Dorsolateral prefrontal cortex (tissue), 120 donors: ENCODE measurements at regions of chr11 and their contacts with region 1.

Region 1: DNA sequence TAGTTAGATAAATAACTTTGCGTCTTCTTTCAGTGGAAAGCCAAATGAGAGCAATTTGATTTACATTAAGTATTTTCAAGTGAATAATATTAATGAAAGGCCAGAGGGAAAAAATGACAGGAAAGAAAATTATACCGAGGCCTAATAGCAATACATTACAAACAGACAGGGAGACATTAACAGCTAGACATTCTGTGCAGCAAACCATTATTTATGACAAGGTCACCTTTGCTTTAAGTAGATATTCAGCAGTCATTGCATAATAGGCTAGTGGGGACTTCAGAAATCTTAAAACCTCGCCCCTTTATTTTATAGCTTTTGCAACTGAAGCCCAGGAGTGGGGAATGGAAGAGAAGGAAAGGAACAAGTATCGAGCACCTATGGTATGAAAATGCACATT is 321.6 kb downstream of the GRM5 start:
- DNase-seq: no peak
- H3K4me3 ChIP-seq: no peak overlapping the region
- H3K27ac ChIP-seq: no peak overlapping the region
- H3K27me3 ChIP-seq: no peaks in the 10 kb centered on the region
- CTCF ChIP-seq: no peak

Region 2: DNA sequence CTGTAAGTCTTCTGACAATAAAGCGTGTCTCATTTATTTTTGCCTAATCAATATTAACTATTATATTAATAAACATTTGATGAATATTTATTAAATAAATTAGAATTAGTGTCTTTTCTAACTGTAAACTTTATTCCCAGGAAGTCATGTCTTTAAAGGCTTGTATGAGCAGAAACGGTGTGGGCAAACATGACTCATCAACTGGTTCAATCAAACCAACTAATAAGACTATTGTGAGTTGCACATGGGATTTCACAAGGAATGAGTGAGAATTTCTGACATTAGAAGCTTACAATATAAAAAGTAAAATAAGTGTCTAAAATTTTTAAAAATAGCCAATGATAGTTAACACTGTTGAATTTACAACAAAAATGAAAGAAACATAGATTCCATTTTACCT is 147.4 kb before region 1 on chr11:
- intact Hi-C with region 1: no loop called
- DNase-seq: no peak
- H3K4me3 ChIP-seq: no peak overlapping the region
- H3K27ac ChIP-seq: no peak overlapping the region
- H3K27me3 ChIP-seq: no peaks in the 10 kb centered on the region
- CTCF ChIP-seq: no peak

Region 3: GRCh38 chr11:88680806-88681205 is 63.3 kb before region 1 on chr11:
- intact Hi-C with region 1: loop called in 1 of 2 experiments (anchors 10 kb)
- DNase-seq: no peak
- H3K4me3 ChIP-seq: no peak overlapping the region
- H3K27ac ChIP-seq: no peak overlapping the region
- H3K27me3 ChIP-seq: no peaks in the 10 kb centered on the region
- CTCF ChIP-seq: no peak

Region 4: DNA sequence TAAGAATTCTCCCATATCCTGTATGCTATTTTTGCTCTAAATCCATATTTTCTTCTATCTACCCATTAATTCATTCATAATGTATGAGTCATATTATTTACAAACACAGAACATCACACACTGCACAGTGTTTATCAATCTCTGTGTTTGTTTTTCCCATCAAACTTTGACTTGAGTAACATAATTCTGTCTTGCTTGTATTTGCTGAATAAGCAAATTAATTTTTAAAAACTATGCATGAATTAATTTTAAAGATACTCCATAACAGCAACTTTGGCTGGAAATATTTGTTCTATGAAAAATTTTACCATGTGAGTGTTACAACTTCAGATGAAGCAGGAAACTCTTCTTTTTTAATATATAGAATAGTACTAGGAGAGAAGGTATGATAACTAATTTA is 46.0 kb after region 1 on chr11:
- intact Hi-C with region 1: no loop called
- DNase-seq: no peak
- H3K4me3 ChIP-seq: no peak overlapping the region
- H3K27ac ChIP-seq: no peak overlapping the region
- H3K27me3 ChIP-seq: no peaks in the 10 kb centered on the region
- CTCF ChIP-seq: no peak

Region 5: GRCh38 chr11:89182773-89183518 is 438.8 kb after region 1 on chr11:
- intact Hi-C with region 1: no loop called
- DNase-seq: no peak
- H3K4me3 ChIP-seq: no peak overlapping the region
- H3K27ac ChIP-seq: no peak overlapping the region
- H3K27me3 ChIP-seq: no peaks in the 10 kb centered on the region
- CTCF ChIP-seq: no peak